Pancreas (tissue), 10 donors: ENCODE measurements at regions of chr5 and their contacts with region 1.

Region 1: GRCh38 chr5:153964880-153965645 is 73.6 kb downstream of the FAM114A2 start:
- DNase-seq: peak in 2 of 6 donors; percentile 33 to 55
- ATAC-seq: peak; percentile 71 to 91 (median 88)
- H3K4me3 ChIP-seq: no peak overlapping the region
- H3K27ac ChIP-seq: no peak overlapping the region
- H3K4me1 ChIP-seq: no peaks in the 10 kb centered on the region
- H3K27me3 ChIP-seq: no peaks in the 10 kb centered on the region
- CTCF ChIP-seq: peak; percentile 20 to 75 (median 69)

Region 2: GRCh38 chr5:152527358-152528052 is 1437.6 kb before region 1 on chr5:
- intact Hi-C with region 1: loop called in 2 of 3 experiments (anchors 10 kb)
- DNase-seq: no peak
- ATAC-seq: no peak
- H3K4me3 ChIP-seq: no peak overlapping the region
- H3K27ac ChIP-seq: no peak overlapping the region
- H3K4me1 ChIP-seq: no peaks in the 10 kb centered on the region
- H3K27me3 ChIP-seq: no peaks in the 10 kb centered on the region
- CTCF ChIP-seq: no peak

Region 3: GRCh38 chr5:152532714-152533113 is 1432.3 kb before region 1 on chr5:
- intact Hi-C with region 1: loop called in 2 of 3 experiments (anchors 10 kb)
- DNase-seq: no peak
- ATAC-seq: peak in 3 of 4 donors; percentile 68 to 77 (median 75)
- H3K4me3 ChIP-seq: no peak overlapping the region
- H3K27ac ChIP-seq: no peak overlapping the region
- H3K4me1 ChIP-seq: peaks cover 0 to 5% (median 3%) of the 10 kb centered on the region in 3 donors
- H3K27me3 ChIP-seq: no peaks in the 10 kb centered on the region
- CTCF ChIP-seq: peak in 2 of 4 donors; percentile 18 to 30